ENCODE measurements at regions of chr12 and their contacts with region 1.

Region 1: GRCh38 chr12:110600254-110600653 is 13.7 kb upstream of the TCTN1 start:
- DNase-seq: no peak
- H3K4me3 ChIP-seq: no peak overlapping the region
- H3K27ac ChIP-seq: no peak overlapping the region
- H3K4me1 ChIP-seq: no peaks in the 10 kb centered on the region
- H3K27me3 ChIP-seq: no peaks in the 10 kb centered on the region
- CTCF ChIP-seq: peak in 2 of 3 donors; percentile 59 to 66
- POLR2A ChIP-seq: no peak

Region 2: GRCh38 chr12:109549613-109550270 is 1050.5 kb before region 1 on chr12:
- intact Hi-C with region 1: loop called (anchors 5 kb)
- DNase-seq: no peak
- H3K4me3 ChIP-seq: no peak overlapping the region
- H3K27ac ChIP-seq: no peak overlapping the region
- H3K4me1 ChIP-seq: no peaks in the 10 kb centered on the region
- H3K27me3 ChIP-seq: peaks cover 0 to 20% of the 10 kb centered on the region in 2 donors
- CTCF ChIP-seq: no peak
- POLR2A ChIP-seq: no peak

Region 3: DNA sequence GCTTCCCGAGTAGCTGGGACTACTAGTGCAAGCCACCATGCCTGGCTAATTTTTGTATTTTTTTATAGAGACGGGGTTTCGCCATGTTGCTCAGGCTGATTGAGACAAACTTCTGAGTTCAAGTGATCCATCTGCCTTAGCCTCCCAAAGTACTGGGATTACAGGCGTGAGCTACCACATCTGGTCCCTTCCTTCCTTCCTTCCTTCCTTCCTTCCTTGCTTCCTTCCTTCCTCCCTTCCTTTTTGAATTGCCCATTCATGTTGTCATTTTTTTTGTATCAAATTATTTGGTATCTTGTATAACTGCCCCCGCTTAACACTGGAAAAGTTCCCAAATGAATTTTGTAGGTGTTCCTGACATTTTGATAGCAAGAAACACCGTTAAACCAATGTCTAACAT is 86.4 kb before region 1 on chr12:
- intact Hi-C with region 1: loop called (anchors 5 kb)
- DNase-seq: no peak
- H3K4me3 ChIP-seq: no peak overlapping the region
- H3K27ac ChIP-seq: no peak overlapping the region
- H3K4me1 ChIP-seq: no peaks in the 10 kb centered on the region
- H3K27me3 ChIP-seq: no peaks in the 10 kb centered on the region
- CTCF ChIP-seq: no peak
- POLR2A ChIP-seq: no peak

Region 4: DNA sequence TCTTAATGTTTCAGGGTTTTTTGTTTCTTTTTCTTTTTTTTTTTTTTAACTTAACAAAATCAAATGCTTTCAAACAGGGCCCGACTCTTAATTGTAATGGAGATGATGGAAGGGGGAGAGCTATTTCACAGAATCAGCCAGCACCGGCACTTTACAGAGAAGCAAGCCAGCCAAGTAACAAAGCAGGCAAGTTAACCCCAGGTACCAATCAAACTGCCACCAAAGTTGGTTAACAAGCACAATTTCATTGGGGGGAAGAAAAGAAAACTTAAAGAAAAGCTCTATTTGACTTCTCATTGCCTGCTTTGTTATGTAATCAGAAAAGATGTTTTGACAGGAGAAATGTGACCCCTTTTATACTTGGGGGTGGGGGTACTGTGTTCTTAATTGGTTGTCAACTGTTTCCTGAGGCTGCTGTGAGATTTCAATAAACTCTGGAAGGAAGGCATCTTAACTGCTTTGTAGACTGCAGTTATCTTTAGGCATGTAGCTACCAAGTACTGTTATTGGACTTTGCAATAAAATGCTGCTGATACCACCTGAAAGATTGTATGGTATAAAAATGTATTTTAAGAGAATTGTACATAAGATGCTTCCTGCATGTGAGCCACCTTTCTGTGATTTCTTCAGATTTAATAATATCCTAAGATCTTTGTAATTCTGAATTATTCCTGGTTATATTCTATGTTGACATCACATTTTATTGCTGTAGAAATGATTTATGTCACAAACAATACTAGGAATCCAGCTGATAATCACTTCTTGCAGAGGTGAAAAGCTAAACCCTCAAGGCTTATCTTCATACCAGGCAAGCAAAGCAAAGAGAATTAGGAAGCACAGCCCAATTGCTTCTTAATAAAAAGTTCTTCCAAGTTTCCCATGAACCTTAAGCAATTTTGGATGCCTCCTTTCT is 1268.7 kb after region 1 on chr12:
- intact Hi-C with region 1: no loop called
- DNase-seq: no peak
- H3K4me3 ChIP-seq: no peak overlapping the region
- H3K27ac ChIP-seq: no peak overlapping the region
- H3K4me1 ChIP-seq: no peaks in the 10 kb centered on the region
- H3K27me3 ChIP-seq: no peaks in the 10 kb centered on the region
- CTCF ChIP-seq: no peak
- POLR2A ChIP-seq: no peak

Measured in breast epithelium (tissue), 4 donors.